ENCODE measurements at regions of chrX and their contacts with region 1.

Region 1: GRCh38 chrX:72126539-72127140 is 5.1 kb downstream of the RTL5 start:
- DNase-seq: peak; percentile 64
- H3K4me3 Mint-ChIP-seq: no peak overlapping the region
- H3K27ac Mint-ChIP-seq: no peak overlapping the region
- H3K4me1 Mint-ChIP-seq: peaks cover 35% of the 10 kb centered on the region
- H3K27me3 Mint-ChIP-seq: peaks cover 55% of the 10 kb centered on the region

Region 2: GRCh38 chrX:71976753-71977152 is 149.9 kb before region 1 on chrX:
- intact Hi-C with region 1: no loop called
- DNase-seq: no peak
- H3K4me3 Mint-ChIP-seq: no peak overlapping the region
- H3K27ac Mint-ChIP-seq: no peak overlapping the region
- H3K4me1 Mint-ChIP-seq: no peaks in the 10 kb centered on the region
- H3K27me3 Mint-ChIP-seq: no peaks in the 10 kb centered on the region

Region 3: DNA sequence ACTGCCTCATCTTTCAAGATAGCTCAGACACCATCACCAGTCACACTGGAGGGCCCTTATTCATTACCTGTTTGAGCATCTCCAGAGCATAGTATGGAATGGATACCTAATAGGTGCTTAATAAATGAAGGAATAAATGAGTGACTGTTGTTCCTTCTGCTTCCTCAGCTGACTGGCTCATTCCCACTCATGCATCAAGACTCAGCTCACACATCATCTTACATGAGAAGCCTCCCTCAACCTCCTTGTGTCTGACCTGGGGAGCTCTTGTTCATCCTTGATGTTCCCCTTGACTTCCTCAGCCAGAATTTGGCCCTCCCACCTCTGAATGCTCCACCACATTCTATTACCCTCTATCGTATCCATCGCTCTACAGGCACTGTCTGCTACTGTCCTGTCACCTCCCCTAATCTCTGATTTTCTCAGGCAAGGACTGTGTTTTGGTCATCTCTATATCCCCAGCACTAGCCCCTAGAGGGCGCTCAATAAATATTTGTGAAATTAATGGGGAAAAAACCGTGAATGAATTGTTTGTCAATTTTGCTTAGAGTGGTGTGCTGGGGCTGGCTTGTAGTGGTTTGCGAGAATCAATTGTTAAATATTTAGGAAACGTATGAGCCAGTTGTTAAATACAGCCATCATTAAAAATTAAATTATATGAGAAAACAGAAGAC is 127.7 kb before region 1 on chrX:
- intact Hi-C with region 1: loop called (anchors 1 kb)
- DNase-seq: no peak
- H3K4me3 Mint-ChIP-seq: no peak overlapping the region
- H3K27ac Mint-ChIP-seq: no peak overlapping the region
- H3K4me1 Mint-ChIP-seq: no peaks in the 10 kb centered on the region
- H3K27me3 Mint-ChIP-seq: peaks cover 27% of the 10 kb centered on the region

Region 4: DNA sequence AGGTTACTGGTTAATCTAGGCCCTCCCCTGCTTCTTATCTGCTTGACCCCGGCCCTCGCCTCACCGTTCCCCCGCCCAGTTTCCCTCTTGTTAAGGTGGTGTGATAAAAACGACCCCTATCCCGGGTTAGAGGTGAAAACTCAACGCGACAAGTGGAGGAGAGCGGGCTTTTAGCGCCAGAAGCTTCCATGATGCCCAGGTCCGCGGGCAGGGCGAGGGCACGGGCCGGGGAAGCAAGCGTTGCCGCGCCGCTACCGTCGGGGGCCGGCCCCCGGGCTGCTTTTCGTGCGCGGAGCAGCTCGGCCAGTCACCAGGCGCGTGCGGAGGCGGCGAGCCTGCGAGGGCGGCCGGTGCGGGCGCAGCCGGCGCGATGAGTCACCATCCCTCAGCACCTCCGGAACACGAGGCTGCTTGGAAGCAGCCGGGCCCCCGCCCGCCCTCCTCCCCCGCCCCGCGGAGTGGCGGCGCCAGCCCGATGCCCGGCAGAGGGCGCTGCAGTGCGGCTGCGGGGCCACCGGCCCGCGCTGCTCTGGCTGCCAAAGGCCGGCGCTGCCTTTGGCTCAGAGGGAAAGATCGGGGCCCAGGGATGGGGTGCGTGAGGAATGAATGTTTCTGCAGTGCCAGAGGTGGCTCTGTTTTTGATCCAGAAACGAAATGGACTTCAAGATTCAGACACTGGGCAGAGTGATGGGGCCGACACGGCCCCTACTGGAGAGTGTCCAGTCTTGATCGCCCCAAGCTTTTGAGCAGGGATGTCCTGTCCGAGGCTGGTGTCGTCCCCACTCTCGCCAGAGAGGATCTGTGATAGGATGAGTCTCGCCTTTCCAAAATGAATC is 108.1 kb before region 1 on chrX:
- intact Hi-C with region 1: loop called (anchors 1 kb)
- DNase-seq: peak; percentile 70
- H3K4me3 Mint-ChIP-seq: no peak overlapping the region
- H3K27ac Mint-ChIP-seq: no peak overlapping the region
- H3K4me1 Mint-ChIP-seq: peaks cover 15% of the 10 kb centered on the region
- H3K27me3 Mint-ChIP-seq: peaks cover 44% of the 10 kb centered on the region

Region 5: GRCh38 chrX:72048968-72049367 is 77.7 kb before region 1 on chrX:
- intact Hi-C with region 1: loop called (anchors 2 kb)
- DNase-seq: no peak
- H3K4me3 Mint-ChIP-seq: no peak overlapping the region
- H3K27ac Mint-ChIP-seq: no peak overlapping the region
- H3K4me1 Mint-ChIP-seq: no peaks in the 10 kb centered on the region
- H3K27me3 Mint-ChIP-seq: peaks cover 19% of the 10 kb centered on the region

Region 6: DNA sequence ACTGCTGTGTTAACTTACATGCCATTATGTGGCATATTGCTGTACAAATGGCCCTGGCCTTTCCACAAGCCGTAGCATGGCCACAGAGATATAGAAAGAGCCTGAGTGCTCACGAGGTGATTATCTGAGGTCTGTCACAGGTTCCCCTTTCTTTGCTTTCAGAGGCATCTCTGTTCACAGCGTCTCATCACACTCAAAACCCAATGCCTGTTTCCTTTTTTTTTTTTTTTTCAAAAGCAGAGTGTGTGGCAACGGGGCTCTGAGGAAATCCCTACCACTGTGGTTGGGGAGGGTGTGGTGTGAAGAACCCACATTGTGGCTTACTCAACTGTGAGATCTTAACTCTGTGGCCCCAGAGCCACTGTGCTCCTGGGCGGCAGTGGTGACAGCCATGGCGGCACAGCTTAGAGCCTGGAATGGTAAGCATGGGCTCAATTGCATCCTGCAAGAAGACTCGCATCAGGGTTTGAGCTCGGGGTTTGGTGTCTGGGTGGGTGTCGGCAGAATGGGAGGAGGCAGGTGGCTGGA is 25.8 kb before region 1 on chrX:
- intact Hi-C with region 1: loop called (anchors 1 kb)
- DNase-seq: peak; percentile 71
- H3K4me3 Mint-ChIP-seq: peak overlapping the region; percentile 52
- H3K27ac Mint-ChIP-seq: peak overlapping the region; percentile 85
- H3K4me1 Mint-ChIP-seq: peaks cover 50% of the 10 kb centered on the region
- H3K27me3 Mint-ChIP-seq: peaks cover 40% of the 10 kb centered on the region

Region 7: DNA sequence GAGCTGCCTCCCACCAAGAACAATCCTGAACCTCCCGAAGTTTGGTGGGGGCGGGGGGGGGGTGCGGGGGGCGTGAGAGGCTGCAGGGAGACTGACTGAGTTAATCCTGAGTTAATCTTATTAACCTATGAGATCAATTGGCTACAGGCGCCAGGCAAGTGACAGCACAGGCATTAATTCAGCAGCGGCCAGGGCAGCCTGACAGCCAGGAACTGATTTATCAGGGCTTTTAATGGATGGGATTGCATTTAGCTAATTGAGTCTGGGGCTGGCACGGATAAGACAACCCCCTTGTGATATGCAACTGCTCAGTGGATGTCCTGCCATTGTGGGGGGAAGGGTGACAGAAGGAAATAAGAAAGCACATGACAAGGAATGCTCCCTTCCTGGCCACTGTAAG is 11.3 kb before region 1 on chrX:
- intact Hi-C with region 1: no loop called
- DNase-seq: no peak
- H3K4me3 Mint-ChIP-seq: no peak overlapping the region
- H3K27ac Mint-ChIP-seq: no peak overlapping the region
- H3K4me1 Mint-ChIP-seq: peaks cover under 1% of the 10 kb centered on the region
- H3K27me3 Mint-ChIP-seq: peaks cover 24% of the 10 kb centered on the region

Region 8: DNA sequence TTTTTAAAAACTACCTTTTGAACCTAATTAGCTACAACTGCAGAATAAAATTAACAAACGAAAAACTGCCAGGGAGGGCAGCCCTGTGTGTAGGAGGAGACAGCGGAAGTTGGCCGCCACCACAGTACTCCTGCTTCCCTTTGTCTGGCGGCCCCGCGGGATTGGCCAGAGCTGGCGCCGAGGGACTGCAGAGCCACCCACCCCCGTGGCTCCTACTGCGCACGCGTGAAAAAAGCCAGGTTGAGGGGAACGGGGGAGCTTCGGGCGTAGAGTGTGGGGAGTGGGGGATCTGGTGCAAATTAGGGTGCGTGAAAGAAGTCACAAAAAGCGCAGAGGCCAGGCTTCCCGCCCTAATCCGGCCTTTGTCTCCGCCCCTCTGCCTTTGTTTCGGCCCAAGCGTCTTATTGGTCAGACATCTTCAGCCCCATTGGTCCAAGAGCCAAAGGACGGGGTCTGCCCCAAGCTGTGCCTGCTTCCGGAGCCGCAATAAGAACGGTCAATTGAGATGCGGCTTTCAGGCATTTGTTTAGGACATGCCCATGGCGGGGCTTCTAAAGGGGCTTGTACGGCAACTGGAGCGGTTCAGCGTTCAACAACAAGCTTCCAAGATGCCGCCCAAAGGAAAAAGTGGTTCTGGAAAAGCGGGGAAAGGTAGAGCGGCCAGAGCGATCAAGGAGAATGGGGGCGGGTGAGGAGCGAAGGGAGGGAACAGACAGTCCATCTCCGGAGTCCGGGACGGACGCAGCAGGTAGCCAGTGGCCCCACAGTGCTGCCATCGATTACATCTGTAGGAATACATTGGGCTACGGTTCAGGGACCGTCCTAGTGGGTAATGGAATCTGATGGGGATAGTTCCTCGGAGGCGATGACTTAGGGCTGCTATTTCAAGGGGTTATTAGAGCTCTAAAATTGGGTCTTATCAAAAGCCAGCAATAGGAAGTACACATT is 54.8 kb after region 1 on chrX and contains the start of gene PIN4:
- intact Hi-C with region 1: loop called (anchors 1 kb)
- DNase-seq: peak; percentile 76
- H3K4me3 Mint-ChIP-seq: no peak within 1 kb of the TSS
- H3K27ac Mint-ChIP-seq: no peak within 1 kb of the TSS
- H3K4me1 Mint-ChIP-seq: peaks cover 16% of the 10 kb centered on the region
- H3K27me3 Mint-ChIP-seq: no peaks in the 10 kb centered on the region
- total RNA-seq, gene PIN4: 10.2 and 13.3 TPM in 2 replicates

Region 9: DNA sequence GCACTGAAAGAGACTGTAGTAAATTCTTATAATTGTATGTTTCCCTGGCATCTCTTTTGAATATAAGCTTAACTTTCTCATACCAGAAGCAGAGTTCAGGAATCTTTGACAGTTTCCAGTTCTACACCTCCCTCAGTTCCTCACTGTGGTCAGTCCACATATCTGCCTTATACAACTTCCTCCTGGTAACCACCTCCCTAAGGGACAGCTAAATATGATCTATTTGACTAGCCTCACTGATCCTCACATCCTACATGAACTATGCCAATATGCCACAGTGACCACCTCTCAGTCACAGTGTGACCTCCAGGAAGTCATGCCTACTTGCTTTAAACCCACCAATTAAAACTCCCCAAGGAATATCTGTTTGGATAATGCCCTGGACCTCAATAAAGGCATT is 497.6 kb after region 1 on chrX:
- intact Hi-C with region 1: no loop called
- DNase-seq: no peak
- H3K4me3 Mint-ChIP-seq: no peak overlapping the region
- H3K27ac Mint-ChIP-seq: no peak overlapping the region
- H3K4me1 Mint-ChIP-seq: peaks cover 29% of the 10 kb centered on the region
- H3K27me3 Mint-ChIP-seq: no peaks in the 10 kb centered on the region